Aorta (tissue), 5 donors: ENCODE measurements at regions of chr4 and their contacts with region 1.

Region 1: GRCh38 chr4:158121187-158121586 is 51.6 kb downstream of the GASK1B start:
- DNase-seq: no peak
- ATAC-seq: peak; percentile 87
- H3K4me3 ChIP-seq: peak overlapping the region in 1 of 2 donors; percentile 82
- H3K27ac ChIP-seq: no peak overlapping the region
- H3K4me1 ChIP-seq: no peaks in the 10 kb centered on the region
- H3K27me3 ChIP-seq: no peaks in the 10 kb centered on the region

Region 2: DNA sequence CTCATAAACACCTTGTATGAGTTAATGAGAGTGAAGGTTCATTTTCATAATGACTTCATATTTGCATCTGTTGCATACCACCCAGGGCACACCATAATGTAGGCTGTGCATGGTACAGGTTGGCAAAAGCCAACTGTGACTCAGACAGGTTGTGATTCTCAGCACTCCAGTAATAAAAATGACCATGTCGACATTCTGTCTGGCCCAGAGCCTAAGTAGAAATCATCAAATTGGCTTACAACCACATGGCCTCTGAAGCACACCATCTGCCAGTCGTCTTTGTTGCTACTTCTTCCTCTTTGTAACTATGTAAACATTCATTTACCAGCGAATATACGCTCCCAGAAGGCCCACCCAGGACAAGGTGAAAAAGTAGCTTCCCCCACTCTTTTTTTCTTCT is 407.8 kb before region 1 on chr4:
- intact Hi-C with region 1: no loop called
- DNase-seq: no peak
- ATAC-seq: no peak
- H3K4me3 ChIP-seq: no peak overlapping the region
- H3K27ac ChIP-seq: no peak overlapping the region
- H3K4me1 ChIP-seq: no peaks in the 10 kb centered on the region
- H3K27me3 ChIP-seq: no peaks in the 10 kb centered on the region

Region 3: GRCh38 chr4:157992038-157992705 is 129.0 kb before region 1 on chr4:
- intact Hi-C with region 1: loop called in 1 of 2 experiments (anchors 5 kb)
- DNase-seq: no peak
- ATAC-seq: peak; percentile 93
- H3K4me3 ChIP-seq: peak overlapping the region; percentile 31 to 89
- H3K27ac ChIP-seq: no peak overlapping the region
- H3K4me1 ChIP-seq: no peaks in the 10 kb centered on the region
- H3K27me3 ChIP-seq: no peaks in the 10 kb centered on the region

Region 4: GRCh38 chr4:158020176-158020575 is 101.0 kb before region 1 on chr4:
- intact Hi-C with region 1: loop called in 1 of 2 experiments (anchors 5 kb)
- DNase-seq: no peak
- ATAC-seq: peak; percentile 76
- H3K4me3 ChIP-seq: no peak overlapping the region
- H3K27ac ChIP-seq: peak overlapping the region in 1 of 2 donors; percentile 39
- H3K4me1 ChIP-seq: peaks cover 0 to 4% of the 10 kb centered on the region in 2 donors
- H3K27me3 ChIP-seq: no peaks in the 10 kb centered on the region

Region 5: DNA sequence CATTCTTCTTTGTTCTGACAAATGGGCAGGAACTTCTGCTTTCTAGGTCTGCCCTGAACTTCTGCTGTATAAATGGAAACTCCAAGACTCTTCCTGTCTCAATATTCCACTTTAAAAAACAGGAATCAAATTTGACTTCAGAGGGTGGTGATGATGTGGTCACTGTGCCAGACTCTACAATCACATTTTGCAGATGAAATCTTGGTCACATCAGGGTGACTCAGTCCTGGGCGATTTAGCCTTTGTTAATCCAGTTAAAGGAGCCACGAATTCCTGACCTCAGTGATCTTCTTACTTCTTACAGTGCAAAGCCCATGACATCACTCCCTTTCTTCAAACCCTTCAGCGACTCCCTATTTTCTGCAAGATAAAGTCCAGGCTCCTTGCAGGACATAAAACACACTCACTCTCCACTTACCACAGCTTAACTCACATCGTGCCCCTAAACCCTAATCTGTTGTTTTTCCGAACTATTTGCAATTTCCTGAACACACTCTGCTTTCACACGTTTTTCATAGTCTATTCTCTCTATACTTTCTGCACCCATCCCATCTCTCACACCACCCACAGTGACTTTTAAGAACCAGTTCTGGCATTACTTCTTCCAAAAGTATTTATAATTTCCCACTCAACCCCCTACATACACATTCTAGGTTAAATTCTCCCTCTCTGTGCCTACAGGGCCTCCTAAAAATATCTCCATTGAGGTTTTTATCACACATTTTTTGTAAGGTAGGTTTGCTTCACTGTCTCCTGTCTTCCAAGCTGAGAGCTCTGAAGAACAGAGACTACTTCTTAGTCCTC is 40.6 kb after region 1 on chr4:
- intact Hi-C with region 1: loop called (anchors 5 kb)
- DNase-seq: peak in 1 of 2 donors; percentile 73
- ATAC-seq: peak; percentile 74
- H3K4me3 ChIP-seq: peak overlapping the region in 1 of 2 donors; percentile 64
- H3K27ac ChIP-seq: peak overlapping the region; percentile 62 to 93
- H3K4me1 ChIP-seq: peaks cover 12 to 22% of the 10 kb centered on the region in 2 donors
- H3K27me3 ChIP-seq: no peaks in the 10 kb centered on the region

Region 6: GRCh38 chr4:158671915-158672806 is 551.0 kb after region 1 on chr4 and contains the start of gene ETFDH:
- intact Hi-C with region 1: loop called in 1 of 2 experiments (anchors 5 kb)
- DNase-seq: peak; percentile 99 to 100
- ATAC-seq: peak; percentile 98
- H3K4me3 ChIP-seq: peak within 1 kb of the TSS; percentile 32 to 65
- H3K27ac ChIP-seq: peak within 1 kb of the TSS; percentile 28 to 49
- H3K4me1 ChIP-seq: no peaks in the 10 kb centered on the region
- H3K27me3 ChIP-seq: no peaks in the 10 kb centered on the region
- total RNA-seq, gene ETFDH: 23.8 to 26.0 TPM